ENCODE measurements at regions of chr2 and their contacts with region 1.

Region 1: DNA sequence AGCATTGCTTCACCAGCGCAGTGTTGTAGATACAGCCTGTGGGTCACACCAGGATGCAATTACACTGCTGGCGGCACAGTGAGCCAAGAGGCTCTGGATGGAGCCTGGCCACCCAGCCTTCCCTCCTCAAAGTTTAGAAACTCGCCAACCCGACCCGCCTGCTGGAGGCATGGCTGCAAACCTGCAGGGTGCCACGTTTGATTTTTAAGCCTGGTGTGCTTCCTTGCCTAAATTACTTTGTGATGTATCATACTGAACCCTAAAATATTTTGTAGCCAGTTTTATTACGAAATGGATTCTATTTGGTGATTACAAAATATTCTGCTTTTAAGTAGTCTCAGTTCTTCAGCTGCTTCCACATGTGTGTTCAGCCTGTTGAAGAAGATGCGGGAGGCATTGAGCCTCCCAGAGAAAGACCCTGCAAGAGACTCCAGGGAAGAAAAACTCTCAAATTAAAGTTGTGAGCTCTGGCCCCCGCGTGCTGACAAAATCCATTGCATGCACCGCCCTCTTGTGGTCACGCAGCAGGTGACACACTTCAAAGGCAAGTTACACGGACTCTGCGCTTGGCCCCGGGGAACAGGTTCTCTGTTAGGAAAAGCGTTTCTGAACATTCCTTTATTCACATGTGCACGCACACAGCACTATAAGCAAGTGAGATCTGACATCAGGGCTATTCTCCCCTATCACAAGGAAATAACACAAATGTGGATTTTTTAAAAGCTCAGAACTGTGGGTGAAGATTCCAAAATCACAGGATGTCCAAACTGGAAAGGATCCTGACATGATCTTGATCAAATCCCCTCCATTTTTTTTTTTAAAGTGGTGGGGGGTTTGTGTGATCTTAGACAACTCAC is 63.0 kb upstream of the TWIST2 start:
- DNase-seq: peak; percentile 34
- H3K4me3 ChIP-seq: no peak overlapping the region
- H3K27ac ChIP-seq: no peak overlapping the region
- H3K4me1 ChIP-seq: no peaks in the 10 kb centered on the region
- H3K27me3 ChIP-seq: no peaks in the 10 kb centered on the region
- CTCF ChIP-seq: peak; percentile 90 to 94

Region 2: GRCh38 chr2:238263204-238264071 is 521.5 kb before region 1 on chr2:
- CTCF ChIA-PET with region 1: no interaction called
- dilution Hi-C with region 1: no loop called
- in situ Hi-C with region 1: no loop called
- intact Hi-C with region 1: loop called (anchors 10 kb)
- DNase-seq: peak; percentile 67
- H3K4me3 ChIP-seq: no peak overlapping the region
- H3K27ac ChIP-seq: no peak overlapping the region
- H3K4me1 ChIP-seq: peaks cover 22% of the 10 kb centered on the region
- H3K27me3 ChIP-seq: no peaks in the 10 kb centered on the region
- CTCF ChIP-seq: peak; percentile 78 to 79

Region 3: GRCh38 chr2:238370823-238371372 is 414.0 kb before region 1 on chr2:
- CTCF ChIA-PET with region 1: no interaction called
- dilution Hi-C with region 1: no loop called
- in situ Hi-C with region 1: loop called in 1 of 2 experiments (anchors 25 kb)
- intact Hi-C with region 1: loop called (anchors 1 kb)
- DNase-seq: peak; percentile 51
- H3K4me3 ChIP-seq: no peak overlapping the region
- H3K27ac ChIP-seq: no peak overlapping the region
- H3K4me1 ChIP-seq: no peaks in the 10 kb centered on the region
- H3K27me3 ChIP-seq: no peaks in the 10 kb centered on the region
- CTCF ChIP-seq: peak; percentile 79 to 82

Region 4: GRCh38 chr2:238513346-238513745 is 271.6 kb before region 1 on chr2:
- CTCF ChIA-PET with region 1: interaction called, 7 read pairs
- dilution Hi-C with region 1: loop called (anchors 25 kb)
- in situ Hi-C with region 1: loop called in 1 of 2 experiments (anchors 25 kb)
- intact Hi-C with region 1: loop called (anchors 1 kb)
- DNase-seq: peak; percentile 44
- H3K4me3 ChIP-seq: no peak overlapping the region
- H3K27ac ChIP-seq: no peak overlapping the region
- H3K4me1 ChIP-seq: peaks cover 5% of the 10 kb centered on the region
- H3K27me3 ChIP-seq: no peaks in the 10 kb centered on the region
- CTCF ChIP-seq: peak; percentile 62 to 78

Region 5: GRCh38 chr2:238720232-238720672 is 64.6 kb before region 1 on chr2:
- CTCF ChIA-PET with region 1: interaction called, 12 read pairs
- dilution Hi-C with region 1: loop called (anchors 5 kb)
- in situ Hi-C with region 1: loop called in 1 of 2 experiments (anchors 10 kb)
- intact Hi-C with region 1: loop called (anchors 1 kb)
- DNase-seq: peak; percentile 100
- H3K4me3 ChIP-seq: no peak overlapping the region
- H3K27ac ChIP-seq: peak overlapping the region; percentile 82
- H3K4me1 ChIP-seq: peaks cover 17% of the 10 kb centered on the region
- H3K27me3 ChIP-seq: no peaks in the 10 kb centered on the region
- CTCF ChIP-seq: peak; percentile 94 to 95

Region 6: DNA sequence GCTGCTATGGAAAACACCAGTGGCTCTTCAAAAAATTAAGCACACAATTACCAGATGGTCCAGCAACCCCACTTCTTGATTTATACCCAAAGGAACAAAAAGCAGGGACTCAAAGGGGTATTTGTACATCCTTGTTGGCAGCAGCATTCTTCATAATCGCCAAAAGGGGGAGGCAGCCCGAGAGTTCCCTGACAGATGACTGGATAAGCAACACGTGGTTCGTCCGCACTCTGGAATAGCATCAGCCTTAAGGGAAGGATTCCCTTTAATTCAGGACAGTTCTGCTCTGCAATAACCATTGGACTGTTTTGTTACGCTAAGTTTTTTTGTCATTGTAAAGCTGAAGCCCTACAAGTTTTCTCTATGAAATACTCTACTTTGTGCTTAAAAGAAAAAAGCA is 13.7 kb before region 1 on chr2:
- CTCF ChIA-PET with region 1: no interaction called
- dilution Hi-C with region 1: no loop called
- in situ Hi-C with region 1: no loop called
- intact Hi-C with region 1: no loop called
- DNase-seq: no peak
- H3K4me3 ChIP-seq: no peak overlapping the region
- H3K27ac ChIP-seq: no peak overlapping the region
- H3K4me1 ChIP-seq: no peaks in the 10 kb centered on the region
- H3K27me3 ChIP-seq: no peaks in the 10 kb centered on the region
- CTCF ChIP-seq: peak; percentile 6 to 32

Region 7: DNA sequence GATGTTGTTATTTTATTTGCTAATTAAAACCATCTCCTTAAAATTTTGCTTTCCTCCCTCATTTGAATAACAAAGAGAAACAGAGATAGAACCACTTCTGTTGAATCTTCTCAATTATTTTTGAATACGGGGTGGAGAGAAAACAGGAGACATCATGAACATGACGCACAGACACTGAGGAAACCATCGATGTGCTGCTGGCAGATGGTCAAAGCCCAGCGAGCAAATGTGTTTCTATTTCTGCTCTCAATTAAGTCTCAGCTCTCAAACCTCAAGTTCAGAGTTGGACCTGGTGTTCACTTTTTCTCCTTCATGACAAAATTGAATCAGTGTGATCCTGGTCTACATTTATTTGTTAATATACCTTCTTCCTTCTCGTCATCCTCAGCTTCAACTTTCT is 26.9 kb after region 1 on chr2:
- CTCF ChIA-PET with region 1: no interaction called
- dilution Hi-C with region 1: no loop called
- in situ Hi-C with region 1: no loop called
- intact Hi-C with region 1: no loop called
- DNase-seq: no peak
- H3K4me3 ChIP-seq: no peak overlapping the region
- H3K27ac ChIP-seq: no peak overlapping the region
- H3K4me1 ChIP-seq: no peaks in the 10 kb centered on the region
- H3K27me3 ChIP-seq: no peaks in the 10 kb centered on the region
- CTCF ChIP-seq: no peak

Region 8: DNA sequence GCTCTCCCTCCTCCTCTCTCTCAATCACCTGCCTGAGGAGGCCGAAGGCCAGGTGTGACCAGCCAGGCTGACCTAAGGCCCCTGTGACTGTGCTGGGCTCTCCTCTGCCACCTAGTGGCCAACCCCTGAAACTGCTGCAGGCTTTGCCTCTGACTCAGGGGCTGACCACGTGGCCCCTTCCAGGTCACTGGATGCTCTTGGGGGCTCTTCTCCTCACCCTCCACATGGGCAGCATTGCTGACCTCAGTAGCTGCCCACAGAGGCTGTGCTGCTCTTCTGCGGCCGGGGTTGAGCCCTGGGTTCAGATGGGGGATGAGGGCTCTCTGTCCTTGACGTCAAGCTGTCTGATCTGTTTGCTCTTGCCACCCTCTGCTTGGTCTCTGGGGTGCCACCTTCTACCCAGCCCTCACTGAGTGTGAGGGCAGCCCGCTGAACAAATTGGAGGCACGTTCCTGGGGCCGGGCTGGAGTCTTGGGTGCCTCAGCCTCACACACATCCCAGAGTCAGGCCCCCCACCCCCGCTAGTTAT is 185.7 kb after region 1 on chr2:
- CTCF ChIA-PET with region 1: no interaction called
- dilution Hi-C with region 1: no loop called
- in situ Hi-C with region 1: no loop called
- intact Hi-C with region 1: loop called (anchors 1 kb)
- DNase-seq: peak; percentile 36
- H3K4me3 ChIP-seq: no peak overlapping the region
- H3K27ac ChIP-seq: no peak overlapping the region
- H3K4me1 ChIP-seq: peaks cover 21% of the 10 kb centered on the region
- H3K27me3 ChIP-seq: no peaks in the 10 kb centered on the region
- CTCF ChIP-seq: peak; percentile 100